ENCODE measurements at regions of chr19 and their contacts with region 1.

Region 1: DNA sequence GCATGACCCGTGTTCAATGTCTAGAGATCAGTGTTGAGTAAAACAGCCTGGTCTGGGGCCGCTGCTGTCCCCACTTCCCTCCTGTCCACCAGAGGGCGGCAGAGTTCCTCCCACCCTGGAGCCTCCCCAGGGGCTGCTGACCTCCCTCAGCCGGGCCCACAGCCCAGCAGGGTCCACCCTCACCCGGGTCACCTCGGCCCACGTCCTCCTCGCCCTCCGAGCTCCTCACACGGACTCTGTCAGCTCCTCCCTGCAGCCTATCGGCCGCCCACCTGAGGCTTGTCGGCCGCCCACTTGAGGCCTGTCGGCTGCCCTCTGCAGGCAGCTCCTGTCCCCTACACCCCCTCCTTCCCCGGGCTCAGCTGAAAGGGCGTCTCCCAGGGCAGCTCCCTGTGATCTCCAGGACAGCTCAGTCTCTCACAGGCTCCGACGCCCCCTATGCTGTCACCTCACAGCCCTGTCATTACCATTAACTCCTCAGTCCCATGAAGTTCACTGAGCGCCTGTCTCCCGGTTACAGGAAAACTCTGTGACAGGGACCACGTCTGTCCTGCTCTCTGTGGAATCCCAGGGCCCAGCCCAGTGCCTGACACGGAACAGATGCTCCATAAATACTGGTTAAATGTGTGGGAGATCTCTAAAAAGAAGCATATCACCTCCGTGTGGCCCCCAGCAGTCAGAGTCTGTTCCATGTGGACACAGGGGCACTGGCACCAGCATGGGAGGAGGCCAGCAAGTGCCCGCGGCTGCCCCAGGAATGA is 1.5 kb upstream of the CEACAM5 start:
- DNase-seq: no peak
- H3K4me3 ChIP-seq: peak overlapping the region in 1 of 4 donors; percentile 31
- H3K27ac ChIP-seq: no peak overlapping the region
- H3K4me1 ChIP-seq: no peaks in the 10 kb centered on the region
- H3K27me3 ChIP-seq: peaks cover 0 to 36% (median 12%) of the 10 kb centered on the region in 3 donors
- CTCF ChIP-seq: peak; percentile 58 to 99 (median 82)
- EP300 ChIP-seq: no peak
- POLR2A ChIP-seq: no peak

Region 2: DNA sequence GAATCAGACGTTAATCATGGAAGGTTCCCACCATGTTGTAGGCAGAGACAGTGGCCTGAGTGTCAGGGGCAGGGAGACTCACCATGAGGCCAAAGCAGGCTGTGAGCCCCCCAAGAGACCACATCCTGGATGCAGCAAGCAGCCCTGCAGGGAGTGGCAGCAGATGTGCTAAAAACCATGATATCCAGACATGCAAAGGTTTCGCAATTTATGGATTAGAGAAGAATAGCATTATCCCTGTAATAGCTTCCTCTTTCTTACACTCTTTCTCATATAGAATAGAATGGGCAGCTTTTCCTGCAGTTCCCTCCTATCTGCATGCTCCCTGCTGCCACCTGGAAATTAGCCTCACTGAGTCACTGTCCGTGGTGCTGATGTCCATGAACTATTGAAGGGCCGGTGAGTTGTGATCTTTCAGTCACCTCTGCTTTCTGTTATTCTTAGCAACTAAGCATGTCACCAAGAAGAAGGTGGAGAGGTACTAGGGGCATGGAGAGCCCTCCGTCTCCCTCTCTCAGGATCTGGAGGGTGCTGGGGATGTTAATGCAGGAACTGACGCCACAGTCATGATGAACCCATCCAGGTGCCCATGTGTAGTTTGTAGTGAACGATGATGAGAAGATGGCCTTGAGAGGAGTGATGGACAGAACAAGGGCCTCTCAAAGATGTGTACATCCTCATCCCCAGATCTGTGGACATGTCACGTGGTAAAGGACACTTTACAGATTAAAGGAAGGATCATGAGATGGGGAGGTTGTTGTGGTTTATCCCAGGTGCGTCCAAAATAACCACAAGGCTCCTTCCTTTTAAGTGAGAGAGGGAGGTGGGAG is 89.9 kb before region 1 on chr19:
- intact Hi-C with region 1: no loop called
- DNase-seq: no peak
- H3K4me3 ChIP-seq: no peak overlapping the region
- H3K27ac ChIP-seq: no peak overlapping the region
- H3K4me1 ChIP-seq: no peaks in the 10 kb centered on the region
- H3K27me3 ChIP-seq: peaks cover 0 to 16% (median 0%) of the 10 kb centered on the region in 3 donors
- CTCF ChIP-seq: no peak
- EP300 ChIP-seq: no peak
- POLR2A ChIP-seq: no peak

Region 3: DNA sequence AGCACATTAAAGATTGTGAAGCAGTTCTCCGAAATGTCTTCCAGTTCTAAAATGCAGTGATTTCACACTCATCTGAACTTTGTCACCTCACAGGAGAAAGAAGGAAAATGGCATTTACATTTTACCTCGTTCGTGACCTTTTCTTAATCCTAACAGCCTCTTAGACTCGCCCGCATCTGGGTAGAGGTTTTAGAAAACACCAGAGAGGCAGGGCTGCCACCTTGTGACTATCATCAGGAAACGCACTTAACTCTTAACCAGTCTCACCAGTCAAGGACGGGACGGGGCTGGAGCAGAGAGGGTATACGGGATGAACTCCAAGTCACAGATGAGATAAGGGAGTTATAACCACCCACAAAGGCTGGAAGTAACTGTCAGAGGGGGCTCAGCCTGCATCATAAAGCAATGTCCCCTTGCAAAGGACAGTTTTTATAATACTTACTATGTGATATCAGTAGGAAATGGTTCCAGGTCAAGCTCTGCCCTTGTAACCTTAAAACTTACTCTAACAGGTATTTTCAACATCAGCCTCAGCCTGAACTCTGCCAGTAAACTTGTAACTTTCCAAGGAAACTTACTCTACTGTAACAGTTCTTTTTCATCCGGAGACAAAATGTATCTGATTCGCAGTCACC is 39.8 kb after region 1 on chr19:
- intact Hi-C with region 1: loop called (anchors 2 kb)
- DNase-seq: no peak
- H3K4me3 ChIP-seq: no peak overlapping the region
- H3K27ac ChIP-seq: no peak overlapping the region
- H3K4me1 ChIP-seq: peaks cover 0 to 14% (median 6%) of the 10 kb centered on the region in 4 donors
- H3K27me3 ChIP-seq: peaks cover 0 to 20% (median 0%) of the 10 kb centered on the region in 3 donors
- CTCF ChIP-seq: peak in 3 of 4 experiments; percentile 26 to 52 (median 45)
- EP300 ChIP-seq: no peak
- POLR2A ChIP-seq: no peak

Region 4: GRCh38 chr19:41753936-41754529 is 47.1 kb after region 1 on chr19:
- intact Hi-C with region 1: loop called (anchors 2 kb)
- DNase-seq: no peak
- H3K4me3 ChIP-seq: no peak overlapping the region
- H3K27ac ChIP-seq: no peak overlapping the region
- H3K4me1 ChIP-seq: peaks cover 0 to 23% (median 11%) of the 10 kb centered on the region in 4 donors
- H3K27me3 ChIP-seq: no peaks in the 10 kb centered on the region
- CTCF ChIP-seq: peak; percentile 16 to 66 (median 56)
- EP300 ChIP-seq: no peak
- POLR2A ChIP-seq: no peak

Region 5: DNA sequence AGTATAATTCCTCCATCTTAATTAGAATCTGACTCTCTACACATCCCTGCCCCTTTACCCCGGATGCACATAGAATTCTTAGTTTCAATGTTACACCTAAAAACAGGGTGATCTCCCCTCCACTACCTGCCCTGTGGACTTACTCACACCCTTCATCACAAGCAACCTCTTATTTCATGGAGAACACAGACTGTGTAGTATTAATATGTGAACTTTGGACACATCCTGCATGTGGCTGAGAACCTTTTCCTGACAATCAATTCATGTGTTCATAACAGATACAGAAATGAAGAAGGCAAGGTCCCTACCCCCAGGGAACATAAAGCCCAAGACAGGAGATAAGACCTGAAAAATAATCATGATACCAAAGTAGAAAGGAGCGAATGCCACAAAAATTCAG is 60.2 kb after region 1 on chr19:
- intact Hi-C with region 1: no loop called
- DNase-seq: no peak
- H3K4me3 ChIP-seq: no peak overlapping the region
- H3K27ac ChIP-seq: no peak overlapping the region
- H3K4me1 ChIP-seq: no peaks in the 10 kb centered on the region
- H3K27me3 ChIP-seq: peaks cover 0 to 4% (median 0%) of the 10 kb centered on the region in 3 donors
- CTCF ChIP-seq: no peak
- EP300 ChIP-seq: no peak
- POLR2A ChIP-seq: no peak

Measured in sigmoid colon (tissue), 7 donors.